ENCODE measurements at regions of chr1 and their contacts with region 1.

Region 1: GRCh38 chr1:27380766-27381733 is 2.1 kb downstream of the CD164L2 start:
- DNase-seq: no peak
- ATAC-seq: no peak
- H3K4me3 ChIP-seq: no peak overlapping the region
- H3K27ac ChIP-seq: no peak overlapping the region
- H3K4me1 ChIP-seq: no peaks in the 10 kb centered on the region
- H3K27me3 ChIP-seq: no peaks in the 10 kb centered on the region
- CTCF ChIP-seq: no peak

Region 2: GRCh38 chr1:26799479-26800142 is 581.4 kb before region 1 on chr1:
- CTCF ChIA-PET with region 1: no interaction called
- POLR2A ChIA-PET with region 1: no interaction called
- in situ Hi-C with region 1: no loop called
- intact Hi-C with region 1: no loop called
- DNase-seq: no peak
- ATAC-seq: peak; percentile 78
- H3K4me3 ChIP-seq: no peak overlapping the region
- H3K27ac ChIP-seq: peak overlapping the region; percentile 59
- H3K4me1 ChIP-seq: peaks cover 18% of the 10 kb centered on the region
- H3K27me3 ChIP-seq: no peaks in the 10 kb centered on the region
- CTCF ChIP-seq: no peak

Region 3: DNA sequence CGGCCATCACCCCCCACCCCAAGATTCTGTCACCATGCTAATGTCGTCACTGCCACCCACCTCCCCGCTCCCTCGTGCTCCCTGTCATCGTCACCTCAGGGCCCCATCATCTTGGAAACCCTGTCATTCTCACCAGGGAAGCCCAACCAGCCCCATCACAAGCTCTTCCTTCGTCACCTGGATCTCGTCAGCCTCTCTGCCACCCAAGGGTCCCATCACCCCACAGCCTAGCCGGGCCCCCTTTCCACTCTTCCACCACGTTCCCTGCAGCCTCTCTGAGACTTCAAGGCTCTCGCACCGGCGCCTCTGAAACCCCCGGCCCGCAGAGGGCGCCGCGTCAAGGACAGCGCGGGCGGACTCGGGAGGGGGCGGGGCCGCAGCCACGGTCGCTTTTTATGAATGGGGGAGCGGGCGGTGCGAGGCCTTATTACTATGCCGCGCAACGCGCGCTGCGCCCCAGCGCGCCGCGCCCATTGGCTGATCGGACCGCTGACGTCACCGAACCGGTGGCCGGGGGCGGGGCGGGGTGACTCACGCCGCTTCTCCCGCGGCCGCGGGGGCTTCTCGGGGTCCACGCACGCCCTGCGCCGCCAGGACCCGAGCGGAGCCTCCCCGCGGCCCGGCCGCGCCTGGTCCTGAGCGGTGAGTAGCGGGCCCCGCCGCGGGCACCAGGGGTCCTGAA is 11.2 kb after region 1 on chr1 and contains the start of gene GPR3:
- CTCF ChIA-PET with region 1: interaction called, 13 read pairs
- POLR2A ChIA-PET with region 1: interaction called, 3 read pairs
- in situ Hi-C with region 1: no loop called
- intact Hi-C with region 1: no loop called
- DNase-seq: no peak
- ATAC-seq: peak; percentile 96
- H3K4me3 ChIP-seq: peak within 1 kb of the TSS; percentile 65 to 71
- H3K27ac ChIP-seq: peak within 1 kb of the TSS; percentile 69
- H3K4me1 ChIP-seq: peaks cover 6% of the 10 kb centered on the region
- H3K27me3 ChIP-seq: no peaks in the 10 kb centered on the region
- CTCF ChIP-seq: peak; percentile 86
- total RNA-seq, gene GPR3: 0.95 TPM

Region 4: GRCh38 chr1:27556781-27557595 is 175.9 kb after region 1 on chr1:
- CTCF ChIA-PET with region 1: no interaction called
- POLR2A ChIA-PET with region 1: no interaction called
- in situ Hi-C with region 1: no loop called
- intact Hi-C with region 1: no loop called
- DNase-seq: no peak
- ATAC-seq: peak; percentile 77
- H3K4me3 ChIP-seq: no peak overlapping the region
- H3K27ac ChIP-seq: peak overlapping the region; percentile 78; the same call in 1 of the 2 replicates
- H3K4me1 ChIP-seq: peaks cover 52% of the 10 kb centered on the region
- H3K27me3 ChIP-seq: no peaks in the 10 kb centered on the region
- CTCF ChIP-seq: peak; percentile 93